Right cardiac atrium (tissue), 5 donors: ENCODE measurements at regions of chr7 and their contacts with region 1.

Region 1: DNA sequence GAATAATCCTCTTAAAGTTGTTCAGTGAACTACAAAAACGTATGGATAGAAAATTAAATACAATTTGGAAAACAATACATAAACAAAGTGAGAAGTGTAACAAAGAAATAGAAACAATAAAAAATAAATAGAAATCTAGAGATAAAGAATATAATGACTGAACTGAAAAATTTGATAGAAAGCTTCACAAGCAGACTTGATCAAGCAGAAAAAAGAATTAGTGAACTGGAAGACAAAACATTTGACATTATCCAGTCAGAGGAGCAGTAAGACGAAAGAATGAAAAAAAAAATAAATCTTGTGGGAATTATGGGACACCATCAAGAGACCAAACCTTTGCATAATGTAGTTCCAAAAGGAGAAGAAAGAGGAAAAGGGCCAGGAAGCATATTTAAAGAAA is 32.4 kb upstream of the NPY start:
- DNase-seq: no peak
- ATAC-seq: no peak
- H3K4me3 ChIP-seq: no peak overlapping the region
- H3K27ac ChIP-seq: no peak overlapping the region
- H3K4me1 ChIP-seq: no peaks in the 10 kb centered on the region
- H3K27me3 ChIP-seq: no peaks in the 10 kb centered on the region

Region 2: GRCh38 chr7:23893942-23894891 is 357.4 kb before region 1 on chr7:
- intact Hi-C with region 1: no loop called
- DNase-seq: no peak
- ATAC-seq: peak in 1 of 2 donors; percentile 89
- H3K4me3 ChIP-seq: no peak overlapping the region
- H3K27ac ChIP-seq: no peak overlapping the region
- H3K4me1 ChIP-seq: no peaks in the 10 kb centered on the region
- H3K27me3 ChIP-seq: no peaks in the 10 kb centered on the region

Region 3: DNA sequence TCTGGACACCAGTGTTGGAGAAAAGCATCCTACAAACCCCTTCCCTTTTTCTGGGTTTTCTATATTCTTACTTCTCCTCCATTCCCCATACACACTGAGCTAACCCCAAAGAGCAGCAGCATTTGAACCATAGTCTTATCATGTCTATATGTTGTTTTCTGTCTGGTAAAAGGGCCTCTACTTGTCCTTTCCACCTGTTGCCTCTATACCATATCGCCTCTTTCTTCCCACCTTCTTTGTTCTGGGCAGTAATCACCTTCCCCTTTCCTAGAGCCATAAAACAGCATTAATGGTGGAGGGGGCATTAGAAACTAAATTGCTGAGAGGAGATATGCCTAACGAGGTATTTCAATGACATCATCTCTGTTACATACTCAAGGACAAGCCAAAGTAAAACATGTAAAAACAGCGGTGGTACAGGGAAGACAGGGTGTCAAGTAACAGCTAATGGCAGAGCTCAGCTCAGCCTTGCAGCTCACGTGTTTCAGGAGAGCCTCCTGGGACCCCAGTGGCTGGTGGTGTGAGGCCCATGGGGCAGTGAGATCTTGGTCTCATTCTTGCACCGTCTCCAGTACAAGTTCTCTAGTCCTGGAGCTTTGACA is 53.0 kb after region 1 on chr7:
- intact Hi-C with region 1: loop called in 1 of 4 experiments (anchors 5 kb)
- DNase-seq: no peak
- ATAC-seq: no peak
- H3K4me3 ChIP-seq: no peak overlapping the region
- H3K27ac ChIP-seq: no peak overlapping the region
- H3K4me1 ChIP-seq: no peaks in the 10 kb centered on the region
- H3K27me3 ChIP-seq: no peaks in the 10 kb centered on the region

Region 4: GRCh38 chr7:24346129-24346528 is 94.6 kb after region 1 on chr7:
- intact Hi-C with region 1: no loop called
- DNase-seq: no peak
- ATAC-seq: no peak
- H3K4me3 ChIP-seq: no peak overlapping the region
- H3K27ac ChIP-seq: no peak overlapping the region
- H3K4me1 ChIP-seq: no peaks in the 10 kb centered on the region
- H3K27me3 ChIP-seq: no peaks in the 10 kb centered on the region